ENCODE measurements at regions of chr16 and their contacts with region 1.

Region 1: GRCh38 chr16:30602616-30603277 is 7.4 kb downstream of the ZNF689 start:
- DNase-seq: no peak
- ATAC-seq: no peak
- H3K4me3 Mint-ChIP-seq: no peak overlapping the region
- H3K27ac Mint-ChIP-seq: no peak overlapping the region
- H3K4me1 Mint-ChIP-seq: peaks cover 9% of the 10 kb centered on the region
- H3K27me3 Mint-ChIP-seq: no peaks in the 10 kb centered on the region
- CTCF ChIP-seq: no peak

Region 2: DNA sequence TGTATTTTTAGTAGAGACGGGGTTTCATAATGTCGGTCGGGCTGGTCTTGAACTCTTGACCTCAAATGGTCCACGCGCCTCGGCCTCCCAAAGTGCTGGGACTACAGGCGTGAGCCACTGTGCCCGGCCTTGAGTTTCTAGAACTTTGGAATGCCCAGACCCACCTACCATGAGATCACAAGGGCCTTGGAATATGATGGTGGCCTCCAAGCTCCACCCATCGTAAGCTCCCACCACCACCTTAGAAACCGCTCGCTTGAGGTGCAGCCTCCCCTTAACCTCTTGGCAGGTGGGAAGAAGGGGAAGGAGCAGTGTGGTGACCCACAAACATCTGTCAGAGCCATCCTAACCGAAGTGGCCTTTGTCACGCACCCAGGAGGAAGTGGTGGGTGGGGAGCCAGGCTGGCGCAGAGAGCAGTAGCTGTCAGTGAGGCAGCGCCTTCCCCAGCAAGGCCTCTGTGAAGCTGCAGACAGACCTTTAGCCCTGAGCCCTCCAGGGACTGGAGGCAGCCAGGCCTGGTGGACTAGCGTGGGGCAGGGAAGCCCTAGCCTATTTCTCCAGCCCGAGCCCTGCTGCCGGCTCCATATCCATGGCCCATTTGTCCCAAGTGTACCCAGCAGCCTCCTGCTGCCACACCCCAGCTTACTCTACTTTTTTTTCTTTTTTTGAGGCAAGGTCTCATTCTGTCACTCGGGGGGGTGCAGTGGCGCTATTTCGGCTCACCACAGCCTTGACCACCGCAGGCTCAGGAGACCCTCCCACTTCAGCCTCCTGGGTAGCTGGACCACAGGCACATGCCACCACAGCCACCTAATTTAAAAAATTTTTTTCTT is 144.0 kb before region 1 on chr16:
- CTCF ChIA-PET with region 1: interaction called, 10 read pairs
- POLR2A ChIA-PET with region 1: interaction called, 6 read pairs
- intact Hi-C with region 1: no loop called
- DNase-seq: peak; percentile 97
- ATAC-seq: peak; percentile 95
- H3K4me3 Mint-ChIP-seq: peak overlapping the region; percentile 62
- H3K27ac Mint-ChIP-seq: peak overlapping the region; percentile 98
- H3K4me1 Mint-ChIP-seq: peaks cover 67% of the 10 kb centered on the region
- H3K27me3 Mint-ChIP-seq: no peaks in the 10 kb centered on the region
- CTCF ChIP-seq: no peak

Region 3: DNA sequence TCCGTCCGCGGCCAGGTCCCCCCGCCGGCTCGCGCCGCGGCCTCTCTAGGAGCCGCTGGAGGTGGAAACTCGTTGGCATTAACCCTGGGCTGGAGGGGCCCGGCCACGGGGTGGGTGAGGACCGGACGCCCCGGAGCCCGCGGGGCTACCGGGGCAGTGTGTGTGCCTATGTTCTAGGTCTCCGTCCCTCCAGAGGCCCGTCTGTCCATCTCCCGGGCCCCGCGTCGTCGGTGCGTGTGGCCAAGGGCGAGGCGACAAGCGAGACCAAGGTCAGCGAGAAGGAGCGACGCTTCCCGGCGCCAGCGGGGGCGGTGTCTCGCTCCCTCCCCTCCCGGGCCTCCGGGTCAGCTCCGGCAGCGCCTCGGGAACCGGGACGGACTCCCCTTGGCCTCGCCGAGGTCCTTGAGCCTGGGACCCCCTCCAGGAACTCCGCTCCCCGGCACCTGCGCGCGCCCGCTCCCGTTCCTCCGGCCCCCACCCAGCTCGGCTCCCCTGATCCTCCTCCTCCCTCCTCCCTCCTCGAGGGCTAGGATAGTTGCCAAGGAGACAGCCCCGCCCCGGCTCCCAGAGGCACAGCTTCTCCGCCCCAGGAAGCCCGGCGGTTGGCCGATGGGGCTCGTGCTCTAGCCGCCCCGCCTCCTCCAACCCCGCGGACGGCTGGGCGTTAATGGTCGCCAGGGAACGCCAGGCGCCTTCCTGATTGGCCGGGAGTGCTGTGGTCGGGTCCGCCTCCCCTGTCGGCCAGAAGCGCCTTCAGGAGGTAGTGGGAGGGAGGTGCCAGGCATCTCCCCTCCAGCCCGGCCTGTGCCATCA is 75.7 kb before region 1 on chr16:
- CTCF ChIA-PET with region 1: interaction called, 20 read pairs
- POLR2A ChIA-PET with region 1: no interaction called
- intact Hi-C with region 1: no loop called
- DNase-seq: peak; percentile 98
- ATAC-seq: peak; percentile 92
- H3K4me3 Mint-ChIP-seq: peak overlapping the region; percentile 74
- H3K27ac Mint-ChIP-seq: peak overlapping the region; percentile 67
- H3K4me1 Mint-ChIP-seq: peaks cover 33% of the 10 kb centered on the region
- H3K27me3 Mint-ChIP-seq: no peaks in the 10 kb centered on the region
- CTCF ChIP-seq: no peak

Region 4: GRCh38 chr16:30571695-30572600 is 30.8 kb before region 1 on chr16 and contains the start of gene ZNF688:
- CTCF ChIA-PET with region 1: interaction called, 19 read pairs
- POLR2A ChIA-PET with region 1: no interaction called
- intact Hi-C with region 1: no loop called
- DNase-seq: peak; percentile 96
- ATAC-seq: peak; percentile 81
- H3K4me3 Mint-ChIP-seq: peak within 1 kb of the TSS; percentile 92
- H3K27ac Mint-ChIP-seq: peak within 1 kb of the TSS; percentile 93
- H3K4me1 Mint-ChIP-seq: peaks cover 41% of the 10 kb centered on the region
- H3K27me3 Mint-ChIP-seq: no peaks in the 10 kb centered on the region
- CTCF ChIP-seq: no peak
- total RNA-seq, gene ZNF688: 4.7 to 5.5 TPM

Region 5: DNA sequence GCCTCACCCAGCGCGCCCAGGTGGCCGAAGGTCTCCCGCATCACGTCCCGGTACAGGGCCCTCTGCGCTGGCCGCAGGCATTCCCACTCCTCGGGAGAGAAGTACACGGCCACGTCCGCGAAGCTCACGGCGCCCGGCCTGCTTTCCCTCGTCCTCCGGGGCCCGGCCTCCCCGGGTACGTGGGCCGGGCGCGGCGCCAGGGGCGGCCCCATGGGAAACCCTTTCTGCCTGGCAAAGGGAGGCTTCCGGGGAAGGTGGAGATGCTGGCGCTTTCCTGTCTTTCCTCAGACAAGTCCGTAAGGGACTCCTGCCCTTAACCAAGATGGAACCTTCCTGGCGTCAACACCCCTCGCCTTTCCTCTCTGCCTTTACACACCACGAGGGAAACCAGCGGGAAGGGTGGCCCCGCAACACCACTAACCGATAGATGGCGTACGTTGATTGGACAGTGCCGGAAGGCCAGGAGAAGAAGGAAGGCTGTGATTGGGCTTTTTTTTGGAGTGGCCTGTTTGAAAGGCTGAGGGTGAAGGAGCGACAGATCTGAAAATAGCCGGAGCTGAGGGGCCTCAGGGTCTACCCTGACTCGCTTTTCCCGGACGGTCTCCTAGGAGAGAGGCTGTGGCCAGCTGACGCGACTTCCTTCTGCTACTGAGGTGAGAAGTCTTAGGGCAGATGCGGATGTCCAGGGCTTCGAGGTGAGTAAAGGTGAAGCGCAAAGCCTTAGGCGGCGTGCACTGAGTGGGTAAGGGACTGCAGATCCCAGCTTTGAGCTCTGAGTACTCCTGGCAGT is 17.2 kb before region 1 on chr16 and contains the start of gene ZNF785:
- CTCF ChIA-PET with region 1: interaction called, 42 read pairs
- POLR2A ChIA-PET with region 1: interaction called, 14 read pairs
- intact Hi-C with region 1: no loop called
- DNase-seq: peak; percentile 97
- ATAC-seq: peak; percentile 98
- H3K4me3 Mint-ChIP-seq: peak within 1 kb of the TSS; percentile 91
- H3K27ac Mint-ChIP-seq: peak within 1 kb of the TSS; percentile 88
- H3K4me1 Mint-ChIP-seq: peaks cover 25% of the 10 kb centered on the region
- H3K27me3 Mint-ChIP-seq: no peaks in the 10 kb centered on the region
- CTCF ChIP-seq: no peak
- total RNA-seq, gene ZNF785: 8.8 to 10.3 TPM

Region 6: GRCh38 chr16:30615358-30616091 is 12.8 kb after region 1 on chr16:
- CTCF ChIA-PET with region 1: interaction called, 28 read pairs
- POLR2A ChIA-PET with region 1: interaction called, 5 read pairs
- intact Hi-C with region 1: no loop called
- DNase-seq: peak; percentile 94
- ATAC-seq: peak; percentile 90
- H3K4me3 Mint-ChIP-seq: no peak overlapping the region
- H3K27ac Mint-ChIP-seq: no peak overlapping the region
- H3K4me1 Mint-ChIP-seq: peaks cover 1% of the 10 kb centered on the region
- H3K27me3 Mint-ChIP-seq: no peaks in the 10 kb centered on the region
- CTCF ChIP-seq: peak; percentile 90

Region 7: GRCh38 chr16:30628627-30629540 is 26.1 kb after region 1 on chr16:
- CTCF ChIA-PET with region 1: interaction called, 18 read pairs
- POLR2A ChIA-PET with region 1: no interaction called
- intact Hi-C with region 1: no loop called
- DNase-seq: peak; percentile 95
- ATAC-seq: peak; percentile 97
- H3K4me3 Mint-ChIP-seq: peak overlapping the region; percentile 57
- H3K27ac Mint-ChIP-seq: peak overlapping the region; percentile 72
- H3K4me1 Mint-ChIP-seq: peaks cover 4% of the 10 kb centered on the region
- H3K27me3 Mint-ChIP-seq: no peaks in the 10 kb centered on the region
- CTCF ChIP-seq: peak; percentile 88

Measured in activated CD8-positive, alpha-beta T cell treated with anti-CD3 and anti-CD28 coated beads for 36 hours (primary cell).